Activated CD8-positive, alpha-beta T cell treated with anti-CD3 and anti-CD28 coated beads for 36 hours (primary cell): ENCODE measurements at regions of chr17 and their contacts with region 1.

Region 1: GRCh38 chr17:34361478-34362061 is 1.5 kb downstream of the CCL1 start:
- DNase-seq: peak; percentile 90
- ATAC-seq: peak; percentile 95
- H3K4me3 Mint-ChIP-seq: no peak overlapping the region
- H3K27ac Mint-ChIP-seq: no peak overlapping the region
- H3K4me1 Mint-ChIP-seq: peaks cover 12% of the 10 kb centered on the region
- H3K27me3 Mint-ChIP-seq: peaks cover 6% of the 10 kb centered on the region
- CTCF ChIP-seq: peak; percentile 94

Region 2: GRCh38 chr17:34171245-34171818 is 190.2 kb before region 1 on chr17:
- CTCF ChIA-PET with region 1: interaction called, 40 read pairs
- POLR2A ChIA-PET with region 1: no interaction called
- intact Hi-C with region 1: no loop called
- DNase-seq: peak; percentile 77
- ATAC-seq: peak; percentile 83
- H3K4me3 Mint-ChIP-seq: no peak overlapping the region
- H3K27ac Mint-ChIP-seq: no peak overlapping the region
- H3K4me1 Mint-ChIP-seq: peaks cover 1% of the 10 kb centered on the region
- H3K27me3 Mint-ChIP-seq: no peaks in the 10 kb centered on the region
- CTCF ChIP-seq: peak; percentile 88

Region 3: GRCh38 chr17:34199932-34200534 is 161.5 kb before region 1 on chr17:
- CTCF ChIA-PET with region 1: interaction called, 319 read pairs
- POLR2A ChIA-PET with region 1: interaction called, 14 read pairs
- intact Hi-C with region 1: loop called (anchors 2 kb)
- DNase-seq: peak; percentile 77
- ATAC-seq: peak; percentile 90
- H3K4me3 Mint-ChIP-seq: no peak overlapping the region
- H3K27ac Mint-ChIP-seq: no peak overlapping the region
- H3K4me1 Mint-ChIP-seq: peaks cover 14% of the 10 kb centered on the region
- H3K27me3 Mint-ChIP-seq: peaks cover 21% of the 10 kb centered on the region
- CTCF ChIP-seq: peak; percentile 100

Region 4: DNA sequence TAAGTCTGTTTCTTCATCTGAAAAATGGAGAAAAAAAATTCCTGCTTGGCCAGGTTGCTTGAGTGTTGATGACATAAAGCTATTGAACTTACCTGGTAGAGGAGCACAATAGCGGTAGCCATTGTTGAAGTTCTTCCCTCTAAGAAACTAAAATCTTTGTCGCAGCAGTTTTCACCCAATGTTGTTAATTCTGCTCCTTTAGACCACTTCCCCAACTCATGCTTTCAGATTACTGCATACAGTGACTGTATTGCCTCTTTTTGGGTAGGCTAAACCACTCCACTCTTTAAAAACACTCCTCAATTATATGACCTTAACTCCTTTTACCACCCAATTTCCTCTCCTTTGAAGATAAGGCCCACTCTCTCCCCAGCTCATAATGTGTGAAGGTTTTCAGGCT is 142.2 kb before region 1 on chr17:
- CTCF ChIA-PET with region 1: interaction called, 10 read pairs
- POLR2A ChIA-PET with region 1: no interaction called
- intact Hi-C with region 1: no loop called
- DNase-seq: no peak
- ATAC-seq: no peak
- H3K4me3 Mint-ChIP-seq: no peak overlapping the region
- H3K27ac Mint-ChIP-seq: no peak overlapping the region
- H3K4me1 Mint-ChIP-seq: no peaks in the 10 kb centered on the region
- H3K27me3 Mint-ChIP-seq: peaks cover 28% of the 10 kb centered on the region
- CTCF ChIP-seq: no peak

Region 5: GRCh38 chr17:34254651-34255380 is 106.8 kb before region 1 on chr17 and contains the start of gene CCL2:
- CTCF ChIA-PET with region 1: interaction called, 10 read pairs
- POLR2A ChIA-PET with region 1: no interaction called
- intact Hi-C with region 1: no loop called
- DNase-seq: no peak
- ATAC-seq: no peak
- H3K4me3 Mint-ChIP-seq: no peak within 1 kb of the TSS
- H3K27ac Mint-ChIP-seq: no peak within 1 kb of the TSS
- H3K4me1 Mint-ChIP-seq: peaks cover 3% of the 10 kb centered on the region
- H3K27me3 Mint-ChIP-seq: peaks cover 19% of the 10 kb centered on the region
- CTCF ChIP-seq: no peak
- total RNA-seq, gene CCL2: not detected

Region 6: GRCh38 chr17:34341916-34342315 is 19.7 kb before region 1 on chr17:
- CTCF ChIA-PET with region 1: interaction called, 11 read pairs
- POLR2A ChIA-PET with region 1: no interaction called
- intact Hi-C with region 1: no loop called
- DNase-seq: no peak
- ATAC-seq: no peak
- H3K4me3 Mint-ChIP-seq: no peak overlapping the region
- H3K27ac Mint-ChIP-seq: no peak overlapping the region
- H3K4me1 Mint-ChIP-seq: no peaks in the 10 kb centered on the region
- H3K27me3 Mint-ChIP-seq: peaks cover 24% of the 10 kb centered on the region
- CTCF ChIP-seq: no peak

Region 7: GRCh38 chr17:34378664-34379101 is 17.1 kb after region 1 on chr17:
- CTCF ChIA-PET with region 1: interaction called, 34 read pairs
- POLR2A ChIA-PET with region 1: no interaction called
- intact Hi-C with region 1: no loop called
- DNase-seq: peak; percentile 54
- ATAC-seq: peak; percentile 57
- H3K4me3 Mint-ChIP-seq: no peak overlapping the region
- H3K27ac Mint-ChIP-seq: no peak overlapping the region
- H3K4me1 Mint-ChIP-seq: peaks cover 49% of the 10 kb centered on the region
- H3K27me3 Mint-ChIP-seq: peaks cover 14% of the 10 kb centered on the region
- CTCF ChIP-seq: no peak

Region 8: GRCh38 chr17:34443619-34444469 is 82.3 kb after region 1 on chr17:
- CTCF ChIA-PET with region 1: no interaction called
- POLR2A ChIA-PET with region 1: no interaction called
- intact Hi-C with region 1: no loop called
- DNase-seq: peak; percentile 14
- ATAC-seq: no peak
- H3K4me3 Mint-ChIP-seq: no peak overlapping the region
- H3K27ac Mint-ChIP-seq: no peak overlapping the region
- H3K4me1 Mint-ChIP-seq: no peaks in the 10 kb centered on the region
- H3K27me3 Mint-ChIP-seq: peaks cover 10% of the 10 kb centered on the region
- CTCF ChIP-seq: peak; percentile 40